Caco-2 (cell line): ENCODE measurements at regions of chr1 and their contacts with region 1.

Region 1: DNA sequence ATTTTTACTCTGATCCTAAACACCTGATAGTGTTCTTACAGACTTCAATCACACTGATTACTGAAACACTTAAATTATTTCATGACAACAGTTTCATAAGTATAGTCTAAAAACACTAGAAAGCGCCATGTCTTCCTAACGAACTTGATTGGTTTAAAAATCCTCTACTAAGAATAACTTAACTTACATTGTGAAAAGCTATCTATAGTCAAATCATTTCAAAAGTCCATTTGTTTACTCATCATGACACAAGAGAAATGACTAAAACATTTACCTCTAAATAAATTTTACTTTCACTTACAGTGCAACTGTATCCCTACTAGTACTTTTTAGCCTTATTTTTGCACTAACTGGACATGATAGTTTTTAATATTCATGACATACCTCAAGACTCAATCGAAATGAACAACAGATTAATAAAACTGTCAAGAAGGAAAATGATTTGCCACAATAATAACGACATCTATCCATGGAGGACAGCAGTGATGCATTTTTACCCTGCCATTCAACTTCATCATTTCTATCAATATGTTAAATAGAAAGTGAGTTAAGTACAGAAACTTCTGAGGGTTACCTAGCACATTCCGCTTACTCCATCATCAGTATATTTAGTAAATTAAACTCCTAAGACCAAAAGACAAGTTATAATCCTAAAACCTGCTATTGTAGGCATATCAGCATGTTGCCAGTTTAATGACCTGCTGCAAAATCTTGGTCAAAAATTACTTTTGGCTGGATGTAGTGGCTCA is 38.4 kb downstream of the AHCTF1 start:
- DNase-seq: no peak
- H3K4me3 ChIP-seq: no peak overlapping the region
- H3K4me3 Mint-ChIP-seq: no peak overlapping the region
- H3K27ac Mint-ChIP-seq: no peak overlapping the region
- H3K4me1 ChIP-seq: no peaks in the 10 kb centered on the region
- H3K4me1 Mint-ChIP-seq: no peaks in the 10 kb centered on the region
- H3K27me3 ChIP-seq: no peaks in the 10 kb centered on the region
- H3K27me3 Mint-ChIP-seq: no peaks in the 10 kb centered on the region
- CTCF ChIP-seq: no peak

Region 2: GRCh38 chr1:246878551-246878950 is 14.8 kb before region 1 on chr1:
- CTCF ChIA-PET with region 1: no interaction called
- POLR2A ChIA-PET with region 1: no interaction called
- intact Hi-C with region 1: loop called (anchors 2 kb)
- DNase-seq: no peak
- H3K4me3 ChIP-seq: no peak overlapping the region
- H3K4me3 Mint-ChIP-seq: no peak overlapping the region
- H3K27ac Mint-ChIP-seq: no peak overlapping the region
- H3K4me1 ChIP-seq: peaks cover 11% of the 10 kb centered on the region
- H3K4me1 Mint-ChIP-seq: peaks cover 16% of the 10 kb centered on the region
- H3K27me3 ChIP-seq: no peaks in the 10 kb centered on the region
- H3K27me3 Mint-ChIP-seq: no peaks in the 10 kb centered on the region
- CTCF ChIP-seq: no peak